CD4-positive, alpha-beta memory T cell (primary cell): ENCODE measurements at regions of chr4 and their contacts with region 1.

Region 1: GRCh38 chr4:15396157-15396800 is 31.6 kb upstream of the C1QTNF7 start:
- DNase-seq: peak; percentile 33 to 44 (median 38)
- H3K4me3 ChIP-seq: no peak overlapping the region
- H3K4me3 Mint-ChIP-seq: no peak overlapping the region
- H3K27ac ChIP-seq: no peak overlapping the region
- H3K27ac Mint-ChIP-seq: peak overlapping the region in 1 of 7 donors; percentile 22
- H3K4me1 ChIP-seq: peaks cover 12% of the 10 kb centered on the region
- H3K4me1 Mint-ChIP-seq: peaks cover 10 to 27% (median 22%) of the 10 kb centered on the region in 4 donors
- H3K27me3 ChIP-seq: no peaks in the 10 kb centered on the region
- H3K27me3 Mint-ChIP-seq: no peaks in the 10 kb centered on the region

Region 2: DNA sequence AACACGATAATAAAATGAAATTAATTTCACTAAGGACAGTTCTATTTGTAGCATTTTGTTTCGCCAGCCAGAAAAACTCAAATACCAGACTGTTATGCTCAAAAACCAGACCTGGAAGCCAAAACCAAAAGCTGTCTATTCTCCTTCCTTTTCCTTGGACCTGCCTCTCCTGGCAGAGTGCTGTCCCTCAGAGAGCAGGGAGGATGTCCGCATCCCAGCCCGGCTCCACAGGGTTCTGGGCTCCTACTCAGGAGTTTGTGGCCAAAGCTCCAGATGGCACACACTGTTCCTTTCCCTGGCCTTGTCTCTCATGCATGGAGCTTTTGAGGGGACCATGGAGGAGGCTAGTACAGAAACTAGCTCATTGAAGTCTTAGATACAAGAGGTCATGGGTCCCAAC is 10.4 kb before region 1 on chr4:
- CTCF ChIA-PET with region 1: interaction called, 10 read pairs
- POLR2A ChIA-PET with region 1: no interaction called
- intact Hi-C with region 1: no loop called
- DNase-seq: no peak
- H3K4me3 ChIP-seq: no peak overlapping the region
- H3K4me3 Mint-ChIP-seq: no peak overlapping the region
- H3K27ac ChIP-seq: no peak overlapping the region
- H3K27ac Mint-ChIP-seq: no peak overlapping the region
- H3K4me1 ChIP-seq: no peaks in the 10 kb centered on the region
- H3K4me1 Mint-ChIP-seq: no peaks in the 10 kb centered on the region
- H3K27me3 ChIP-seq: no peaks in the 10 kb centered on the region
- H3K27me3 Mint-ChIP-seq: peaks cover 1 to 7% of the 10 kb centered on the region in 2 donors

Region 3: DNA sequence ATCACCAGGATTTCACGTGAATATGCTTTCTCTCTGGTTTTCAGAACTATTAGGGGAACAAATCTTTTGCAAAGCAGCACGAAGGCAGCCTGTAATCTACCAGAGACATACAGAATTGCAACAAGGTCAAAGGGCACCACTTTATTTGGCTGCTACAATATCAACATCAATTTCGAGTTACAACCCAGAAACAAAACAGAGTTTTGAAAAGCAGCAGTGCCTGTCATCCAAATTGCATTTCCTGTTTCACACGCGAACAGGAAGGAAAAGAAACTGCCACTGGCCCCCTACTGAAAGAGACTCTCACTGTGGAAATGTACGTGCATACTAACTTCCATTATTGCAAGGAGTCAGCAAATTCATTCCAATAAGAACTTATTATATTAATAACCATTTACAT is 14.5 kb after region 1 on chr4:
- CTCF ChIA-PET with region 1: interaction called, 14 read pairs
- POLR2A ChIA-PET with region 1: interaction called, 5 read pairs
- intact Hi-C with region 1: no loop called
- DNase-seq: peak in 3 of 5 donors; percentile 12 to 25 (median 18)
- H3K4me3 ChIP-seq: no peak overlapping the region
- H3K4me3 Mint-ChIP-seq: peak overlapping the region; percentile 18 to 76 (median 62)
- H3K27ac ChIP-seq: no peak overlapping the region
- H3K27ac Mint-ChIP-seq: peak overlapping the region; percentile 19 to 85 (median 71)
- H3K4me1 ChIP-seq: peaks cover 22% of the 10 kb centered on the region
- H3K4me1 Mint-ChIP-seq: peaks cover 27 to 49% (median 30%) of the 10 kb centered on the region in 4 donors
- H3K27me3 ChIP-seq: no peaks in the 10 kb centered on the region
- H3K27me3 Mint-ChIP-seq: no peaks in the 10 kb centered on the region

Region 4: GRCh38 chr4:15438939-15439524 is 42.8 kb after region 1 on chr4:
- CTCF ChIA-PET with region 1: no interaction called
- POLR2A ChIA-PET with region 1: no interaction called
- intact Hi-C with region 1: no loop called
- DNase-seq: no peak
- H3K4me3 ChIP-seq: no peak overlapping the region
- H3K4me3 Mint-ChIP-seq: no peak overlapping the region
- H3K27ac ChIP-seq: no peak overlapping the region
- H3K27ac Mint-ChIP-seq: no peak overlapping the region
- H3K4me1 ChIP-seq: no peaks in the 10 kb centered on the region
- H3K4me1 Mint-ChIP-seq: no peaks in the 10 kb centered on the region
- H3K27me3 ChIP-seq: no peaks in the 10 kb centered on the region
- H3K27me3 Mint-ChIP-seq: peaks cover 0 to 2% of the 10 kb centered on the region in 2 donors